ENCODE measurements at regions of chr10 and their contacts with region 1.

Region 1: GRCh38 chr10:102904346-102904745 is 13.7 kb upstream of the CNNM2 start:
- DNase-seq: no peak
- ATAC-seq: no peak
- H3K4me3 Mint-ChIP-seq: no peak overlapping the region
- H3K27ac Mint-ChIP-seq: no peak overlapping the region
- H3K4me1 Mint-ChIP-seq: no peaks in the 10 kb centered on the region
- H3K27me3 Mint-ChIP-seq: no peaks in the 10 kb centered on the region

Region 2: GRCh38 chr10:102752934-102753664 is 151.2 kb before region 1 on chr10:
- CTCF ChIA-PET with region 1: interaction called, 19 read pairs
- POLR2A ChIA-PET with region 1: no interaction called
- DNase-seq: peak; percentile 53
- ATAC-seq: peak; percentile 84
- H3K4me3 Mint-ChIP-seq: no peak overlapping the region
- H3K27ac Mint-ChIP-seq: no peak overlapping the region
- H3K4me1 Mint-ChIP-seq: peaks cover 41% of the 10 kb centered on the region
- H3K27me3 Mint-ChIP-seq: no peaks in the 10 kb centered on the region

Region 3: DNA sequence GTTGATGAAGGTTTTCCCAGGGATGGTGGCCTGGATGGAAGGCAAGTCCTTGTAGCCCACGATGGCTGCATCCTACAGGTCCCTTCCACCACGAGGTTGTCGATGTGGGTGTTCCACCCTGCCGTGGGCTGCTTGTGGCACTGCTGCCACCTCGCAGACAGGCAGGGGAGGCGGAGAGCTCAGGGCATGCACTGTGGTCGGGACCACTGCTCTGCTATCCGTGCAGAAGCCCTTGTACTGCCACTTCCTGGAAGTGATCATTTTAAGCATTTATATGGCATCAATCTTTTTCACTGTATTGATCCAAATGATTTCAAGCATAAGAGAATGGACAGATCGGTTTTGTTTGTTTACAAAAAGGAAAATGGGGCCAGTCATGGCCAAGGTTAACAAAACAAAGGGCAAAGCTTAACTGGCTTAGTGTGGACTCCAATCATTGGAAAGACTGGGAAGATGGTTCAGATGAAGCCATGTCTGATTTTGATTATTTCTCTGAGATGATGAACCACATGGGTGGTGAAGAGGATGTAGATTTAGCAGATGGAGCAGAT is 58.9 kb before region 1 on chr10:
- CTCF ChIA-PET with region 1: interaction called, 11 read pairs
- POLR2A ChIA-PET with region 1: no interaction called
- DNase-seq: no peak
- ATAC-seq: no peak
- H3K4me3 Mint-ChIP-seq: no peak overlapping the region
- H3K27ac Mint-ChIP-seq: no peak overlapping the region
- H3K4me1 Mint-ChIP-seq: no peaks in the 10 kb centered on the region
- H3K27me3 Mint-ChIP-seq: peaks cover 7% of the 10 kb centered on the region

Region 4: DNA sequence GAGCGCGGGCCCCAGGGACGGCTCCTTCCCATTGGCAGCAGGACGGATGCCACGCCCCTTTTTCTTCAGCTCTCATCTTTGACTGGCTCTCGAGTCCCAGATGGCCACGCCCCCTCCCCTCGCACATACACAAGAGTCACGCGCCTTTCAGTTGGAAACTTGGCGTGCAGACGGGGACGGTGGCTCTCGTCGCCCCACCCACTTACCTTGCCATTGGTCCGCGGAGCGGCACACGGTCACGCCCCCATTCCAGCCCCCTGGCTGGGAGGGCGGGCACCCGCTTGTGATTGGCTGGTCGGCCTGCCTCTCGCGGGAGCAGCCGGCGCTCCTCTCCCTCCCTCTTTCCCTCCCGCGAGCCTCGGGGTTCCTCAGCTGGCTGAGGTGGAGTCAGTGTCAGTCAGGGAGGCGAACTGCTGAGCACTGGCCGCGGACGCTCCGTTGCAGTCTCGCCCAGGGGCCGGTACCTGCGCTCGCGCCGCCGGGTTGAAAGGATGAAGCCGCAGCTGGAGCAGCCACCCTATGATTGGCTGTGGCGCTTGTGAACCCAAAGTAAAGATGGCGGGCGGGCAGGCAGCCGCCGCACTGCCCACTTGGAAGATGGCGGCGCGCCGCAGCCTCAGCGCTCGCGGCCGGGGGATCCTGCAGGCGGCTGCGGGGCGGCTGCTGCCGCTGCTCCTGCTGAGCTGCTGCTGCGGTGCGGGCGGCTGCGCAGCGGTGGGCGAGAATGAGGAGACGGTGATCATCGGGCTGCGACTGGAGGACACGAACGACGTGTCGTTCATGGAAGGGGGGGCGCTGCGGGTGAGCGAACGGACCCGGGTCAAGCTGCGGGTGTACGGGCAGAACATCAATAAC is 13.8 kb after region 1 on chr10 and contains the start of gene CNNM2:
- CTCF ChIA-PET with region 1: interaction called, 39 read pairs
- POLR2A ChIA-PET with region 1: no interaction called
- DNase-seq: peak; percentile 100
- ATAC-seq: peak; percentile 91
- H3K4me3 Mint-ChIP-seq: peak within 1 kb of the TSS; percentile 92
- H3K27ac Mint-ChIP-seq: peak within 1 kb of the TSS; percentile 93
- H3K4me1 Mint-ChIP-seq: peaks cover 62% of the 10 kb centered on the region
- H3K27me3 Mint-ChIP-seq: no peaks in the 10 kb centered on the region
- total RNA-seq, gene CNNM2: 7.7 to 8.1 TPM